ENCODE measurements at regions of chr12 and their contacts with region 1.

Region 1: DNA sequence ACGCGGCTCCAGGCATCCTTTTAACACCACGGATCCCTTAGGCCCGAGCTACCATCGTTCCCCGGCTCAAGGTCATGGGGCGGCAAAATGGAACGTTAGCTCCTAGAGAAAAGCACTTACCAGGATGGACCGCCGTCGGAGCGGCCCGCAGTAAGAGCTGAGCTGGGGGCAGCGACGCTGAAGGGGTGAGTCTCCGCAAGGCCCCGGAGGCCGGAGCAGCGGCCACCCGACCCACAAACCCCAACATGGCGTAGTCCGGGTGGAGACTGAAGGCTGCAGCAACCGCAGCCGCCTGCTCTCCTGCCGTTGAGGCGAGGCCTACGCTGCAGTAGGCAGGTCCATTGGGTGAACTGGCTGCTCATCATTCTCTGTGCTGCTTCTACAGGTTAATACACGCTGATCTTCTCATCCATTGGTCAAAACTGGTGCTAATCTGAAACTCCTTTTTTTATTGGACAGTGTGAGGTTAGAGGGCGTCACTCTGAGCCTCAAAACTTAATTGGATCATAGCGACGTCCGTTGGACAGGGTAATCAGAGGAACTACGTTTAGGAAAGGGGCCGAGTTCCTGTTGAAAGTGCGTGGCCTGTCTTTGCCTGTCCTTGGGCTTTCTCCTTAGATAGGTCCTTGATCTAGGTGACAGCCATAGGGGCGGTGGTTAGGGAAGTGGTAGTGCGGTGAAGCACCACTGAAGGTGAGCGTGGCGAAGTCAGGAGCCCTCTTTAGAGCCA is at the start of gene ATP5F1B:
- DNase-seq: peak; percentile 94 to 99 (median 98)
- ATAC-seq: peak; percentile 97 to 99 (median 98)
- H3K4me3 ChIP-seq: peak within 1 kb of the TSS; percentile 75 to 99 (median 86)
- H3K27ac ChIP-seq: peak within 1 kb of the TSS; percentile 87 to 98 (median 96)
- H3K4me1 ChIP-seq: peaks cover 5 to 48% (median 38%) of the 10 kb centered on the region in 12 donors
- H3K27me3 ChIP-seq: no peaks in the 10 kb centered on the region
- CTCF ChIP-seq: peak in 1 of 12 donors; percentile 9
- POLR2A ChIP-seq: peak; percentile 90 to 98
- total RNA-seq, gene ATP5F1B: 1,755 to 3,502 (median 2,732) TPM

Region 2: DNA sequence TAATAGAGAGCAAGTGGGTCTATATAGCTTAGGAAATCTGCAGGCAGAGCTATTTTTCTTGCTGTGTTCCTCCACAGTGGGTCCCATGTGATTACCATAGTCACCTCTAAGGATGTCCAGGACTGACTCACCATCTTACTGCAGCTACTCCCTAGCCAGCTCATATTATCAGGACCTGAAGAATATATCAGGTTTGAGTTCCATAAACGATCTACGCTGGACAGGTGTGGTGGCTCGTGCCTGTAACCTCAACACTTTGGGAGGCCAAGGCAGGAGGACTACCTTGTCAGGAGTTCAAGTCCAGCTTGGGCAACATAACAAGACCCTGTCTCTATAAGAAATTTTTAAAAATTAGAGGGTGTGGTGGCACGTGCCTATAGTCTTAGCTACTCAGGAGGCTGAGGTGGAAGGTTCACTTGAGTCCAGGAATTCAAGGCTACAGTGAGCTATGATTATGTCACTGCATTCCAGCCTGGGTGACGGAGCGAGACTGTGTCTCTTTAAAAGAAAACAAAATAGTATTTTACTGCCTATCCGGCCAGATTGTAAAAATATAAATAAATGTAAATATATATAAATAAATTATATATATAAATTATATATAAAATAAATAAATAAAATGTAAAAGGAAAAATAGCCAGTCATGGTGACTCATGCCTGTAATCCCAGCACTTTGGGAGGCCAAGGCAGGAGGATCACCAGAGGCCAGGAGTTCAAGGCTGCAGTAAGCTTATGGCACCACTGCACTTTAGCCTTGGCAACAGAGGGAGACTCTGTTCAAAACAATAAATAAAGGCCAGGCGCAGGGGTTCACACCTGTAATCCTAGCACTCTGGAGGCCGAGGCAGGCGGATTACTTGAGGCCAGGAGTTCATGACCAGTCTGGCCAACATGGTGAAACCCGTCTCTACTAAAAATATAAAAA is 184.4 kb before region 1 on chr12:
- intact Hi-C with region 1: no loop called
- DNase-seq: no peak
- ATAC-seq: no peak
- H3K4me3 ChIP-seq: no peak overlapping the region
- H3K27ac ChIP-seq: no peak overlapping the region
- H3K4me1 ChIP-seq: peaks cover 0 to 7% (median 0%) of the 10 kb centered on the region in 12 donors
- H3K27me3 ChIP-seq: no peaks in the 10 kb centered on the region
- CTCF ChIP-seq: no peak
- POLR2A ChIP-seq: no peak

Region 3: GRCh38 chr12:56724972-56725722 is 79.3 kb after region 1 on chr12 and contains the start of gene NACA:
- intact Hi-C with region 1: loop called (anchors 1 to 10 kb)
- DNase-seq: peak; percentile 99 to 100 (median 99)
- ATAC-seq: peak; percentile 97 to 98 (median 97)
- H3K4me3 ChIP-seq: peak within 1 kb of the TSS; percentile 68 to 98 (median 82)
- H3K27ac ChIP-seq: peak within 1 kb of the TSS; percentile 79 to 97 (median 93)
- H3K4me1 ChIP-seq: peaks cover 9 to 54% (median 40%) of the 10 kb centered on the region in 12 donors
- H3K27me3 ChIP-seq: no peaks in the 10 kb centered on the region
- CTCF ChIP-seq: peak in 1 of 12 donors; percentile 15
- POLR2A ChIP-seq: peak in 1 of 2 donors; percentile 86
- total RNA-seq, gene NACA: 361 to 741 (median 537) TPM